ENCODE measurements at regions of chr10 and their contacts with region 1.

Region 1: GRCh38 chr10:6563075-6563474 is 17.0 kb downstream of the PRKCQ start:
- DNase-seq: peak; percentile 90
- ATAC-seq: peak; percentile 89
- H3K4me3 Mint-ChIP-seq: peak overlapping the region; percentile 71
- H3K27ac Mint-ChIP-seq: peak overlapping the region; percentile 88
- H3K4me1 Mint-ChIP-seq: peaks cover 88% of the 10 kb centered on the region
- H3K27me3 Mint-ChIP-seq: no peaks in the 10 kb centered on the region
- CTCF ChIP-seq: no peak

Region 2: GRCh38 chr10:6498771-6499170 is 64.3 kb before region 1 on chr10:
- CTCF ChIA-PET with region 1: interaction called, 4 read pairs
- POLR2A ChIA-PET with region 1: interaction called, 18 read pairs
- intact Hi-C with region 1: no loop called
- DNase-seq: peak; percentile 51
- ATAC-seq: peak; percentile 62
- H3K4me3 Mint-ChIP-seq: peak overlapping the region; percentile 33
- H3K27ac Mint-ChIP-seq: peak overlapping the region; percentile 89
- H3K4me1 Mint-ChIP-seq: peaks cover 31% of the 10 kb centered on the region
- H3K27me3 Mint-ChIP-seq: no peaks in the 10 kb centered on the region
- CTCF ChIP-seq: no peak

Region 3: DNA sequence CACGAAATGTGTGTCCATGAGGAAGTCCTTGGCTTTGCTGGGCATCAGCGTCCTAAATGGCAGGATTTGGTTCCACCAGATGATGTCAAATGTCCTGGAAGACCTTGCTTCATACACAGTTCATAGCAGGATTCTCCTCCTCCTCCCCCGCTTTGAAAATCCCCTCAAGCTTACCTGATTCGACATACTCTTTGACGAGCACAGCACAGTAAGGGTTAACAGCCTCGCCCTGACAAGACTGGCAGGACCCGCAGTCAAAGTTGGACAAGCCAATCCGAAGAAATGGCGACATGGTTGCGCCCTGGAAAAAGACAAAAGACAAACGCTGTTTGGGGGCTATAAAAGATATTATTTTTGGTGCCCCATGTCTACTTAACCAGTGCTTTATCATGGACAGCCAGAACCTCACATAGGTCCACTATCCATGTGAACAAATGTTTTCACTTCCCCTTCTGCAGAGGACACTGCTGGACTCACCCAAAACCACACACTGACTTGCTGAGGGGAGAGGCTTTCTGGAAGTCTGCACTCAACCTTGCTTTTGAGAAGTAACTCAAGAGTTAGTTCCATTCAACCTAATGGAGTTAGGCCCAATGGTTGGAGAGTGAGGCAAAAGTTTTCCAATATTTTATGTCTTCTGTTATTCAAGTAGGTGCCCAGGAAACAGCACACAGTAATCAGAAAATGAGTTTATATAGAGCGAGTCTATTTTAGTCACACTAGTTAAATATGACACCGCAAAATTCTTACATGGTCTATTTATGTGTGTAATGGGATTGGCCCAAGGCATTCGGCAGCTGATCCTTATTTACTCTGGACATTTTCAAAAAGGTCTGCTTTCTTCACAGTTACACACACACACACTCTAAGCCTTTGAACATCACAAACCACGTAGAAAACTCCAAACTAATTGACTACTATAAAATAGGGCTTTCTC is 48.0 kb before region 1 on chr10:
- CTCF ChIA-PET with region 1: no interaction called
- POLR2A ChIA-PET with region 1: interaction called, 12 read pairs
- intact Hi-C with region 1: no loop called
- DNase-seq: no peak
- ATAC-seq: no peak
- H3K4me3 Mint-ChIP-seq: no peak overlapping the region
- H3K27ac Mint-ChIP-seq: peak overlapping the region; percentile 48
- H3K4me1 Mint-ChIP-seq: peaks cover 90% of the 10 kb centered on the region
- H3K27me3 Mint-ChIP-seq: no peaks in the 10 kb centered on the region
- CTCF ChIP-seq: no peak

Region 4: DNA sequence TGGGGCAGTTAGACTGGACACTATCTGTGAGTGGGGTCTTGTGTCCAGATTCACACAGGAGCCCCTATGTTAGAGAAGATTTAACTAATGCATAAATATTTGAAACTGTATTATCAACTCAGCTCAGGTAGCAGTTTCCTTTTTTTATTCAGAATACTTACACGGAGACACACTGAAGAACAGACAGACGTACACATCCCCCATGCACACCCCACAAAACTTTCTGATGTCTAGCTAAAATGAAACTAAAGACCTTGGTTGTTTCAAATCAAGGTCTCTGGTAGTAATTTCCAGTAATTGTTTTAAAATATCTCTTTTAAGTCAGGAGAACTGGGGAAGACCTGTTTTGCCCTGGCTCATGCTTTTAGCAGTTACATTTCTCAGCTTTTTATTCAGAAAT is 72.7 kb after region 1 on chr10:
- CTCF ChIA-PET with region 1: no interaction called
- POLR2A ChIA-PET with region 1: no interaction called
- intact Hi-C with region 1: no loop called
- DNase-seq: no peak
- ATAC-seq: peak; percentile 45
- H3K4me3 Mint-ChIP-seq: no peak overlapping the region
- H3K27ac Mint-ChIP-seq: peak overlapping the region; percentile 35
- H3K4me1 Mint-ChIP-seq: peaks cover 28% of the 10 kb centered on the region
- H3K27me3 Mint-ChIP-seq: no peaks in the 10 kb centered on the region
- CTCF ChIP-seq: no peak

Region 5: GRCh38 chr10:6713716-6714115 is 150.6 kb after region 1 on chr10:
- CTCF ChIA-PET with region 1: no interaction called
- POLR2A ChIA-PET with region 1: no interaction called
- intact Hi-C with region 1: no loop called
- DNase-seq: peak; percentile 20
- ATAC-seq: no peak
- H3K4me3 Mint-ChIP-seq: no peak overlapping the region
- H3K27ac Mint-ChIP-seq: no peak overlapping the region
- H3K4me1 Mint-ChIP-seq: peaks cover 11% of the 10 kb centered on the region
- H3K27me3 Mint-ChIP-seq: peaks cover 27% of the 10 kb centered on the region
- CTCF ChIP-seq: no peak

Measured in activated CD8-positive, alpha-beta T cell treated with anti-CD3 and anti-CD28 coated beads for 36 hours (primary cell).